IMR-90 (cell line): ENCODE measurements at regions of chr21 and their contacts with region 1.

Region 1: DNA sequence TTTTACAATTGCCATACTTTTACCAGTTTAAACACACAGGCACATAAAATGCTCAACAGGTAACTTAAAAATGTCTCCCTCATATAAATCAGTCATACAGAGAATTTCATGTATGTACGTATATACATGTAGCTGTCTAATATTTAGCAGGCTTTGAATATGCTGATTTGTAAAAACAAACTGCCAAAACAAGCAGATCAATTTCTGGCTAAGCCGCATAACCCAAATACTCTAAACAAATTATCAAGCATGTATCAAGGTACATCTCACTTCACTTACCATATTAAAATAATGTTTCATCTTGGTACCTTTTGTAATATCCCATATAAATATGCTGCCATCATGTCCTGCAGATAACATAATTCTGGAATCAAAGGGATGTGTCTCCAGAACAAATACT is 43.8 kb downstream of the BRWD1 start:
- DNase-seq: no peak
- ATAC-seq: no peak
- H3K4me3 ChIP-seq: no peak overlapping the region
- H3K27ac ChIP-seq: no peak overlapping the region
- H3K4me1 ChIP-seq: no peaks in the 10 kb centered on the region
- H3K27me3 ChIP-seq: no peaks in the 10 kb centered on the region
- CTCF ChIP-seq: no peak
- POLR2A ChIP-seq: no peak
- RAD21 ChIP-seq: no peak

Region 2: GRCh38 chr21:38965251-38965650 is 304.4 kb before region 1 on chr21:
- CTCF ChIA-PET with region 1: no interaction called
- POLR2A ChIA-PET with region 1: interaction called, 17 read pairs
- dilution Hi-C with region 1: no loop called
- in situ Hi-C with region 1: no loop called
- intact Hi-C with region 1: no loop called
- DNase-seq: peak; percentile 51
- ATAC-seq: no peak; the same call in 1 of the 2 replicates
- H3K4me3 ChIP-seq: no peak overlapping the region
- H3K27ac ChIP-seq: peak overlapping the region; percentile 15; the same call in 1 of the 2 replicates
- H3K4me1 ChIP-seq: peaks cover 3% of the 10 kb centered on the region; the same call in 1 of the 2 replicates
- H3K27me3 ChIP-seq: no peaks in the 10 kb centered on the region
- CTCF ChIP-seq: no peak
- POLR2A ChIP-seq: no peak
- RAD21 ChIP-seq: no peak

Region 3: DNA sequence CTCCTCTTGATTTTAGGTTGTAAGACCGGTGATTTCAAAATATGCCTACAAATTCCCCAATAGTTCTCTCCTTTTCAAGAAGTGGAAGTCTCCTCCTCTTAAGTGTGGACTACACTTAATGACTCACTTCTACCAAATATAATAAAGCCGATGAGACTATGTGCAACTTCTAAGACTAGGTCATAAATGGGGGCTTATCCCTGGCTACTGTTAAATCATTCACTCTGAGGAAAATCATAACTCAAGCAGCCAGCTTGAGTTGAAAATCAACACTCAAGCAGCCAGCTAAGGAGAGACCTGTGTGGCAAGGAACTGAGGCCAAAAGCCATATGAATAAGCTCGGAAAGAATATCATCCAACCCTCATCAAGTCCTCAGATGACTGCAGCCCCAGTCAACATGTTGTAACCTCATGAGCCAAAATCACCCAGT is 36.7 kb before region 1 on chr21:
- CTCF ChIA-PET with region 1: no interaction called
- POLR2A ChIA-PET with region 1: no interaction called
- dilution Hi-C with region 1: no loop called
- in situ Hi-C with region 1: no loop called
- intact Hi-C with region 1: loop called (anchors 5 kb)
- DNase-seq: peak; percentile 20
- ATAC-seq: no peak
- H3K4me3 ChIP-seq: no peak overlapping the region
- H3K27ac ChIP-seq: no peak overlapping the region
- H3K4me1 ChIP-seq: no peaks in the 10 kb centered on the region
- H3K27me3 ChIP-seq: no peaks in the 10 kb centered on the region
- CTCF ChIP-seq: no peak
- POLR2A ChIP-seq: no peak
- RAD21 ChIP-seq: no peak

Region 4: DNA sequence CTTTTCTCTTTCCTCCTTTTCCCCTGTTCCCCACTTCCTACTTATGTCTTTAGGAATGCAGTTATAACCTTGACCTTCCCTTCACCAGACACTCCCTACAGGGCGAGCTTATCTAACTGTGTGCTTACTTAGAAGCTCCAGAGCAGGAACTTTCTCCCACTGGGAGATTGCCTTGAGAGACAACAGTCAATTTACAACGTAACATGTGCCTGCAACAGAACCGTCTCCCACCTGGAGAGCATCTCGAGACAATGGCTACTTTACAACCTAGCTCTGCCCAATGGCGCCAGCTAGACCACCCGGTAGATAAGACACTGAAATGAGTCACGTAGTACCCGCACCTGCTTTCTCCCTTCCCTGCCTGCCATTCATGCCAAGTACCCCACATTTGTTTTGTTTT is 62.6 kb after region 1 on chr21:
- CTCF ChIA-PET with region 1: no interaction called
- POLR2A ChIA-PET with region 1: no interaction called
- dilution Hi-C with region 1: no loop called
- in situ Hi-C with region 1: no loop called
- intact Hi-C with region 1: no loop called
- DNase-seq: no peak
- ATAC-seq: no peak
- H3K4me3 ChIP-seq: no peak overlapping the region
- H3K27ac ChIP-seq: no peak overlapping the region
- H3K4me1 ChIP-seq: no peaks in the 10 kb centered on the region
- H3K27me3 ChIP-seq: no peaks in the 10 kb centered on the region
- CTCF ChIP-seq: no peak
- POLR2A ChIP-seq: no peak
- RAD21 ChIP-seq: no peak